GM10248 (cell line): ENCODE measurements at regions of chr19 and their contacts with region 1.

Region 1: GRCh38 chr19:48578891-48579290 is 26.9 kb downstream of the SULT2B1 start:
- DNase-seq: no peak
- CTCF ChIP-seq: no peak

Region 2: DNA sequence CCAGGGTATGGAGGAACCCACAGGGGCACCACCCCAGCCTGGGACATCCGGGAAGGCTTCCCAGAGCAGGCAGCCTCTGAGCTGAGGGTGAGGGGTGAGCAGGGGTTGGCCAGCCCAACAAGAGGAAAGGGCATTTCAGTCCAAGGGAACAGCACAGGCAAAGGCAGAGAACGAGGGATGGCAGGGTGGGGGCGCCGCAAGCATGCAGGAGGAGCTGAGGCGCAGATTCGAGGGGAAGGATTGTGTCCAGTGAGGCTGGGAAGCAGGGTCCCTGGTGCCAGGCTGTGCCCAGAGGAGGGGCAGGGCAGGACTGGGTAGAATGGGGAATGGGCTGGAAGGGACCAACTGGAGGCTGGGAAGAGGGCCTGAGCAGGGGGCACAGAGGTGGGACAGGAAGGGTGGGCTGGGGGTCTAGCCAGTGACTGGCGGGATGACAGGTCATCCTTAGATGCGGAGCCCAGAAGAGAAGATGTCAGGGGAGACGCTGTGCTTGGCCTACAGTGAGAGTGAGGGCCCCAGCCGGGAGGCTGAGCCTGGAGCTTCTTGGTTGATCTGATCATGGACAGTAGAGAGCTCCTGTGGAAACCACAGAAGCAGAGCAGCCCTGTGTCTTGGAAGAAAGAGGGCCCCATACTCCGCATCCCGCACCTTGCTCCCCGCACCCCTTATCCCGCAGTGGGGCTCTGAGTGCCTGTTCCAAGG is 239.9 kb before region 1 on chr19:
- CTCF ChIA-PET with region 1: interaction called, 14 read pairs
- POLR2A ChIA-PET with region 1: interaction called, 10 read pairs
- DNase-seq: no peak
- CTCF ChIP-seq: no peak

Region 3: GRCh38 chr19:48660854-48661731 is 82.2 kb after region 1 on chr19:
- CTCF ChIA-PET with region 1: no interaction called
- POLR2A ChIA-PET with region 1: no interaction called
- DNase-seq: peak; percentile 97
- CTCF ChIP-seq: no peak